Activated T-helper 2 cell treated with anti-CD3 and anti-CD28 coated beads, Interferon-gamma antibody, Interleukin-2, Interleukin-4, amounts not matched to agents 10 μg/mL and 5 μg/mL and 100 μg/mL, durations not matched to agents 14 hours and 24 hours and 36 hours (primary cell): ENCODE measurements at regions of chr4 and their contacts with region 1.

Region 1: GRCh38 chr4:24472514-24473308 is 111.6 kb downstream of the DHX15 start:
- DNase-seq: peak; percentile 53
- H3K4me3 Mint-ChIP-seq: peak overlapping the region; percentile 96
- H3K27ac Mint-ChIP-seq: peak overlapping the region; percentile 57
- H3K4me1 Mint-ChIP-seq: peaks cover 31% of the 10 kb centered on the region
- H3K27me3 Mint-ChIP-seq: peaks cover 72% of the 10 kb centered on the region

Region 2: GRCh38 chr4:23333946-23334878 is 1138.5 kb before region 1 on chr4:
- intact Hi-C with region 1: loop called (anchors 10 kb)
- DNase-seq: peak; percentile 56
- H3K4me3 Mint-ChIP-seq: peak overlapping the region; percentile 47
- H3K27ac Mint-ChIP-seq: peak overlapping the region; percentile 76
- H3K4me1 Mint-ChIP-seq: peaks cover 30% of the 10 kb centered on the region
- H3K27me3 Mint-ChIP-seq: peaks cover 5% of the 10 kb centered on the region

Region 3: GRCh38 chr4:24456431-24456830 is 16.3 kb before region 1 on chr4:
- intact Hi-C with region 1: no loop called
- DNase-seq: no peak
- H3K4me3 Mint-ChIP-seq: no peak overlapping the region
- H3K27ac Mint-ChIP-seq: no peak overlapping the region
- H3K4me1 Mint-ChIP-seq: no peaks in the 10 kb centered on the region
- H3K27me3 Mint-ChIP-seq: peaks cover 5% of the 10 kb centered on the region

Region 4: DNA sequence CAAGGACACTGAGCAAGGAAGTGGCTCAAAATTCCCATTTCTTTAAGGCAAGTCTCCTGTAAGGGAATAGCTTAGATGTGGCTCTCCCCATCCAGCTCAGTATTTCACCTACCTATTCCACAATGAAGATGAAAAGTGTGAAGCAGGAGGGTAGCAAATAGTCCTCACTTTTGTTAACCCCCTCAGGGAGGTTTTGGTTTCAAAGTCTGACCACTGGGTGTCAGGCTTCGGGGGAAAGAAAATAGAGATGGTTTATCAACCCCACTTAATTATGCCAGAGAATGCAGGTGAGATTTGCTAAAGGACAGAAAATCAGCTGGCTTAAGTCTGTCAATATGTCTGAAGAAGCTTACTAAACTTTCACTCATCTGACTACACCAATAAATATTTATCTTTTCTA is 42.1 kb after region 1 on chr4:
- intact Hi-C with region 1: loop called (anchors 5 kb)
- DNase-seq: no peak
- H3K4me3 Mint-ChIP-seq: no peak overlapping the region
- H3K27ac Mint-ChIP-seq: no peak overlapping the region
- H3K4me1 Mint-ChIP-seq: peaks cover 4% of the 10 kb centered on the region
- H3K27me3 Mint-ChIP-seq: no peaks in the 10 kb centered on the region

Region 5: GRCh38 chr4:25376754-25377571 is 904.3 kb after region 1 on chr4 and contains the start of gene ANAPC4:
- intact Hi-C with region 1: loop called (anchors 5 kb)
- DNase-seq: peak; percentile 93
- H3K4me3 Mint-ChIP-seq: no peak within 1 kb of the TSS
- H3K27ac Mint-ChIP-seq: peak within 1 kb of the TSS; percentile 89
- H3K4me1 Mint-ChIP-seq: peaks cover 4% of the 10 kb centered on the region
- H3K27me3 Mint-ChIP-seq: no peaks in the 10 kb centered on the region
- total RNA-seq, gene ANAPC4: 39.5 and 40.9 TPM in 2 replicates